Calu3 (cell line): ENCODE measurements at regions of chr5 and their contacts with region 1.

Region 1: DNA sequence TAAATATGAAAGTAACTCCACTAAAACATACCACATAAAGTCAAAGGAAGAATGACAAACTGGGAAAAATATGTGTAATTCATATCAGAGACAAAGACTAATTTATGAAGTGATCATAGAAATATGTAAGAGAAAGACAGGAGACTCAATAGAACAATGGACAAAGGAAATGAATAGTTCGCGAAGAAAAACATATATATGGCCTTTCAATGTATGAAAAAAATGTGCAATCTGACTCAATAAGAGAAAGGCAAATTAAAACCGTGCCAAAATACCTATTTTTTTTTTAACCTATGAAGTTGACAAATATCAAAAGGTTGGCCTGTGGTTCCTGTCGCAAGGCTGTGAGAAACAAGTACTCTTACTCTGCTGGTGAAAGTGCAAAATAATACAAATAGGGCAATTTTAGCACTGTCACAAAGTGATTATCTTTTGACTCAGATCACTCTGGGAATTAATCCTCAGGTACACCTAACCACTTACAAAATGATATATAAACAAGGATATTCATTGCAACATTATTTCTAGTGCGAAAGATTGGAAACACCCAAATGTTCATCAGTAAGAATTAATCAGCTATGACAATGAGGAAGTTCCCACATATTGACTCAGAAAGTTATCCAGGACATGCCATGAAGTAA is 3.7 kb downstream of the C9 start:
- DNase-seq: no peak
- H3K4me3 Mint-ChIP-seq: peak overlapping the region; percentile 42
- H3K27ac Mint-ChIP-seq: peak overlapping the region; percentile 95
- H3K4me1 Mint-ChIP-seq: peaks cover 29% of the 10 kb centered on the region
- H3K27me3 Mint-ChIP-seq: no peaks in the 10 kb centered on the region
- CTCF ChIP-seq: no peak

Region 2: DNA sequence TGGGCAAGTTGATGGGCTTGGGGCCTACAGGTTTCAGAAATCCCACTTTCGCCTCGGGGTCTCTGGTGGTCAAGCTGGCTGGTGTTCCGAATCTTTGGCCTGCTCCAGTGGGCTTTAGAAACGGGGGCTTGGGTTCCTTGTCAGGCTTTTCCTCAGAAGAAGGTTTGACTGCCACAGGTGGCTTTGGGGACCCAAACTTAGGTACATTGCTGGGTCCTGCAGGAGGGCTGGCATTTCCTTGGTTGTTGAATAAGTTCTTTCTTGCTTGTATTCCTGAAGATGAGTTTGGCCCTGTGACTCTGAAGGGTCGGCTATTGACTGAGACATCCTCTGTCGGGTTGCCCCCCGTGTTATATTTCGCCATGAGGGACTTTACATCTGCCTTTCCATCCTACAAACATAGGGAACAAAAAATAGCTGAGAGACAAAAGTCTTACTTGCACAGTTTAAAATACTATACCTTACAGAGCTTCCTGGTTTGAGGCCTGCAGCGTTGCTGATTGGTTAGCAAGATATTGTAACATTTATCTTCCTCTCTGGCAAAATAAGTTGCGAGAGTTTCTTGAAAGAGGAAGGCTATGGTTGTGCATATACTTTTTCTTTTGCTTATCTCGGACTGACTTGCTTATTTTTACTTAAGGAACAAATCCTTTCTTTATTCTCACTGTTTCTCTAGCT is 157.9 kb before region 1 on chr5:
- CTCF ChIA-PET with region 1: no interaction called
- intact Hi-C with region 1: no loop called
- DNase-seq: no peak
- H3K4me3 Mint-ChIP-seq: no peak overlapping the region
- H3K27ac Mint-ChIP-seq: no peak overlapping the region
- H3K4me1 Mint-ChIP-seq: peaks cover 28% of the 10 kb centered on the region
- H3K27me3 Mint-ChIP-seq: no peaks in the 10 kb centered on the region
- CTCF ChIP-seq: no peak

Region 3: GRCh38 chr5:39294736-39295135 is 65.9 kb before region 1 on chr5:
- CTCF ChIA-PET with region 1: no interaction called
- intact Hi-C with region 1: loop called (anchors 2 kb)
- DNase-seq: no peak
- H3K4me3 Mint-ChIP-seq: no peak overlapping the region
- H3K27ac Mint-ChIP-seq: no peak overlapping the region
- H3K4me1 Mint-ChIP-seq: no peaks in the 10 kb centered on the region
- H3K27me3 Mint-ChIP-seq: no peaks in the 10 kb centered on the region
- CTCF ChIP-seq: no peak